ENCODE measurements at regions of chr5 and their contacts with region 1.

Region 1: GRCh38 chr5:128126241-128126640 is 42.7 kb downstream of the SLC12A2 start:
- DNase-seq: no peak
- ATAC-seq: no peak
- H3K4me3 ChIP-seq: no peak overlapping the region
- H3K27ac ChIP-seq: no peak overlapping the region
- H3K4me1 ChIP-seq: no peaks in the 10 kb centered on the region
- H3K27me3 ChIP-seq: no peaks in the 10 kb centered on the region
- CTCF ChIP-seq: no peak
- POLR2A ChIP-seq: no peak
- RAD21 ChIP-seq: no peak

Region 2: DNA sequence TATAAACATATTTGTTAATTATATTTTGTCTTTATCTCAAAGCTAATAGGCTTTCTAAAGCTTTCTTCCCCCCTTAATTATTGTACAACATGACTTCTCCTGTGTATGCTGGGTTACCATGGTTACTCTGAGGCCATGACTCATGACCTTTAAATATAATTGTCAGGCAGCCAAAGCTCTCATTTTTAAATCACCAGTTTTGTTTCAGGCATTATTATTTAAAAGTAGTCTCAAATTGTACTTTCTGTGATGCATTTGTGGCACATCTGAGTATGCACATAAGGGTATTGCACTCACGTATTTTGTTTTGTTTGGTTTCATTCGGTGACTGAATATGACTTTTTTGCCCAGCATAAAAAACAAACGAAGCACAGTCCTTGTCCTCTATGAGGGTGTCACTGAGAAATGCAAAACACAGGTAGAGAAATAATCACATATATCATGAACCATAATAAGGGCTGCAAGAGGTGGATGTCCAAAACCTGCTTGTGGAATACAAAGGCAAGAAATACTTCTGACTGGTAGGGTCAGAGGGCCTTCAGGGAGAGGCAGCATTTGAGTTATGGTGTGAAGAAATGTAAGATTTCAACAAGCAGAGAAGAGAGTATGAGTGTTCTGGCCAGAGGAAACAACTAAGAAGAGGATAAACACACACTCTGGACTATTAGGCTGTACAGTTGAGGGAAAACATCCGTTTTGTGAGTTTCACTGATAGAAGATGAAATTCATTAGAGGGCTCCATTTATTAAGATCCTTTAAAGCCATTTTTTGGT is 420.9 kb before region 1 on chr5:
- CTCF ChIA-PET with region 1: no interaction called
- POLR2A ChIA-PET with region 1: no interaction called
- dilution Hi-C with region 1: no loop called
- in situ Hi-C with region 1: no loop called
- intact Hi-C with region 1: no loop called
- DNase-seq: peak; percentile 86
- ATAC-seq: peak; percentile 49
- H3K4me3 ChIP-seq: no peak overlapping the region
- H3K27ac ChIP-seq: no peak overlapping the region
- H3K4me1 ChIP-seq: peaks cover 3% of the 10 kb centered on the region; the same call in 1 of the 2 replicates
- H3K27me3 ChIP-seq: peaks cover 2% of the 10 kb centered on the region; the same call in 1 of the 2 replicates
- CTCF ChIP-seq: no peak
- POLR2A ChIP-seq: no peak
- RAD21 ChIP-seq: no peak

Region 3: GRCh38 chr5:128144491-128144890 is 18.2 kb after region 1 on chr5:
- CTCF ChIA-PET with region 1: no interaction called
- POLR2A ChIA-PET with region 1: no interaction called
- dilution Hi-C with region 1: no loop called
- in situ Hi-C with region 1: no loop called
- intact Hi-C with region 1: no loop called
- DNase-seq: peak; percentile 70
- ATAC-seq: peak; percentile 75
- H3K4me3 ChIP-seq: no peak overlapping the region
- H3K27ac ChIP-seq: no peak overlapping the region
- H3K4me1 ChIP-seq: no peaks in the 10 kb centered on the region
- H3K27me3 ChIP-seq: no peaks in the 10 kb centered on the region
- CTCF ChIP-seq: no peak
- POLR2A ChIP-seq: no peak
- RAD21 ChIP-seq: no peak

Region 4: GRCh38 chr5:128169401-128170017 is 43.3 kb after region 1 on chr5:
- CTCF ChIA-PET with region 1: no interaction called
- POLR2A ChIA-PET with region 1: no interaction called
- dilution Hi-C with region 1: no loop called
- in situ Hi-C with region 1: no loop called
- intact Hi-C with region 1: loop called (anchors 5 kb)
- DNase-seq: no peak
- ATAC-seq: no peak
- H3K4me3 ChIP-seq: no peak overlapping the region
- H3K27ac ChIP-seq: no peak overlapping the region
- H3K4me1 ChIP-seq: no peaks in the 10 kb centered on the region
- H3K27me3 ChIP-seq: no peaks in the 10 kb centered on the region
- CTCF ChIP-seq: no peak
- POLR2A ChIP-seq: no peak
- RAD21 ChIP-seq: no peak

Region 5: GRCh38 chr5:128228008-128228407 is 101.8 kb after region 1 on chr5:
- CTCF ChIA-PET with region 1: no interaction called
- POLR2A ChIA-PET with region 1: no interaction called
- dilution Hi-C with region 1: no loop called
- in situ Hi-C with region 1: no loop called
- intact Hi-C with region 1: no loop called
- DNase-seq: peak; percentile 91
- ATAC-seq: peak; percentile 91
- H3K4me3 ChIP-seq: no peak overlapping the region
- H3K27ac ChIP-seq: no peak overlapping the region
- H3K4me1 ChIP-seq: peaks cover 3% of the 10 kb centered on the region
- H3K27me3 ChIP-seq: no peaks in the 10 kb centered on the region
- CTCF ChIP-seq: no peak
- POLR2A ChIP-seq: no peak
- RAD21 ChIP-seq: no peak

Measured in IMR-90 (cell line).